ENCODE measurements at regions of chr2 and their contacts with region 1.

Region 1: GRCh38 chr2:168758970-168759820 is 43.2 kb upstream of the NOSTRIN start:
- DNase-seq: peak in 1 of 2 experiments; percentile 52
- H3K4me3 ChIP-seq: no peak overlapping the region
- H3K4me3 Mint-ChIP-seq: no peak overlapping the region
- H3K27ac Mint-ChIP-seq: no peak overlapping the region
- H3K4me1 ChIP-seq: no peaks in the 10 kb centered on the region
- H3K4me1 Mint-ChIP-seq: no peaks in the 10 kb centered on the region
- H3K27me3 ChIP-seq: no peaks in the 10 kb centered on the region
- H3K27me3 Mint-ChIP-seq: no peaks in the 10 kb centered on the region
- CTCF ChIP-seq: peak; percentile 52 to 60

Region 2: GRCh38 chr2:168174756-168175155 is 584.4 kb before region 1 on chr2:
- CTCF ChIA-PET with region 1: no interaction called
- POLR2A ChIA-PET with region 1: no interaction called
- intact Hi-C with region 1: loop called (anchors 5 kb)
- DNase-seq: no peak
- H3K4me3 ChIP-seq: no peak overlapping the region
- H3K4me3 Mint-ChIP-seq: no peak overlapping the region
- H3K27ac Mint-ChIP-seq: no peak overlapping the region
- H3K4me1 ChIP-seq: peaks cover 5% of the 10 kb centered on the region; the same call in 1 of the 2 replicates
- H3K4me1 Mint-ChIP-seq: no peaks in the 10 kb centered on the region
- H3K27me3 ChIP-seq: no peaks in the 10 kb centered on the region
- H3K27me3 Mint-ChIP-seq: peaks cover 7% of the 10 kb centered on the region
- CTCF ChIP-seq: no peak

Region 3: DNA sequence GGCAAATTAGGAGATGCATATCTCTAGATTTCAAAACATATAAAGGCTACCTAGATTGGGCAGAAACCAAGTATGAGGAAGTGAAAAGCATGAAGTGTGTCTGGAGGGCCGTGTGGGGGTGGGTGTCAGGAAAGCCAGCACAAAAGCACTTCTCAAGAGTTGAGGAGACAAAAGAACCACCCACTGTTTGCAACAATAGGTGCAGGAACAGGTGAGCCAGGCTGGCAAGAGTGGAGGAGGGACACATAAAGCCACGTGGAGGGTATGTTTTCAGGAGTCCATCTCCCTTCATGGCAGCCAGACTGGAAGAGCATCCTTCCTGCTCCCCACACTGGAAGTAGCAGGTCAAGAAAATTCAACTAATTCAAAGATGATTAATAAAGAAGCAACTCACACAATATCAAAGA is 206.7 kb before region 1 on chr2:
- CTCF ChIA-PET with region 1: no interaction called
- POLR2A ChIA-PET with region 1: no interaction called
- intact Hi-C with region 1: no loop called
- DNase-seq: no peak
- H3K4me3 ChIP-seq: no peak overlapping the region
- H3K4me3 Mint-ChIP-seq: no peak overlapping the region
- H3K27ac Mint-ChIP-seq: no peak overlapping the region
- H3K4me1 ChIP-seq: peaks cover 12% of the 10 kb centered on the region
- H3K4me1 Mint-ChIP-seq: peaks cover 7% of the 10 kb centered on the region
- H3K27me3 ChIP-seq: no peaks in the 10 kb centered on the region
- H3K27me3 Mint-ChIP-seq: no peaks in the 10 kb centered on the region
- CTCF ChIP-seq: no peak

Region 4: GRCh38 chr2:168697668-168698121 is 61.5 kb before region 1 on chr2:
- CTCF ChIA-PET with region 1: no interaction called
- POLR2A ChIA-PET with region 1: no interaction called
- intact Hi-C with region 1: loop called (anchors 2 kb)
- DNase-seq: peak; percentile 31 to 48
- H3K4me3 ChIP-seq: no peak overlapping the region
- H3K4me3 Mint-ChIP-seq: no peak overlapping the region
- H3K27ac Mint-ChIP-seq: no peak overlapping the region
- H3K4me1 ChIP-seq: no peaks in the 10 kb centered on the region
- H3K4me1 Mint-ChIP-seq: peaks cover 9% of the 10 kb centered on the region
- H3K27me3 ChIP-seq: no peaks in the 10 kb centered on the region
- H3K27me3 Mint-ChIP-seq: no peaks in the 10 kb centered on the region
- CTCF ChIP-seq: no peak

Measured in Caco-2 (cell line).